ENCODE measurements at regions of chrX and their contacts with region 1.

Region 1: DNA sequence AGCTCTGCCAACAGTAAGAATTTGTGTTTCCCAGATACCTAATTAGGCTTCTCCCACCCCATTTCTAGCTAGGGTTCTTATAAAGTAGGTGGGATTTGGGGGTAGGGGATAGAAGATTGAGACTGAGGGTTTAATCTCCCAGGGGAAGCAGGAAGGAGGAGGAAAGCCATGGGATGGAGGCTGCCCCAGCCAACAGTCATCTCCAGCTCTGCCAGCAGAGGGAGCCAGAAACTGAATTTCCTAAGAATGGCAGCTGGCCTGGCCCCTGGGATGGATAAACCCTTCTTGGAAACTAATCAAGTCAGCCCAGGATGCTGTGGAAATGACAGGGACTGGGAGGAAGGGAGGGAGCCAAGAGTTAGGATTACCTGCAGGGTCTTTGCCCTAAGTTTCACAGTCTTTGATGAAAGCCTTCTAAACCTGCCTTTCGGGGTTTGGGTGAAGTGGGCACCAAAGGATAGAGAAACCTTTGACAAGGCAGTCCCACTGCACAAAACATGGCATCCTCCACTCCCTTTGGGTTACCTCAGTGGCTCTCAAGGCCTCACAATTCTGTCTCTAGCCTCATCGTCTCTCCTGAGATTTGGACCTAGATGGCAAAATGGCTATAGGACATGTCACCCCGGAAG is 6.7 kb upstream of the ERCC6L start:
- DNase-seq: peak; percentile 58
- H3K4me3 Mint-ChIP-seq: no peak overlapping the region
- H3K27ac Mint-ChIP-seq: no peak overlapping the region
- H3K4me1 Mint-ChIP-seq: peaks cover 2% of the 10 kb centered on the region
- H3K27me3 Mint-ChIP-seq: no peaks in the 10 kb centered on the region

Region 2: DNA sequence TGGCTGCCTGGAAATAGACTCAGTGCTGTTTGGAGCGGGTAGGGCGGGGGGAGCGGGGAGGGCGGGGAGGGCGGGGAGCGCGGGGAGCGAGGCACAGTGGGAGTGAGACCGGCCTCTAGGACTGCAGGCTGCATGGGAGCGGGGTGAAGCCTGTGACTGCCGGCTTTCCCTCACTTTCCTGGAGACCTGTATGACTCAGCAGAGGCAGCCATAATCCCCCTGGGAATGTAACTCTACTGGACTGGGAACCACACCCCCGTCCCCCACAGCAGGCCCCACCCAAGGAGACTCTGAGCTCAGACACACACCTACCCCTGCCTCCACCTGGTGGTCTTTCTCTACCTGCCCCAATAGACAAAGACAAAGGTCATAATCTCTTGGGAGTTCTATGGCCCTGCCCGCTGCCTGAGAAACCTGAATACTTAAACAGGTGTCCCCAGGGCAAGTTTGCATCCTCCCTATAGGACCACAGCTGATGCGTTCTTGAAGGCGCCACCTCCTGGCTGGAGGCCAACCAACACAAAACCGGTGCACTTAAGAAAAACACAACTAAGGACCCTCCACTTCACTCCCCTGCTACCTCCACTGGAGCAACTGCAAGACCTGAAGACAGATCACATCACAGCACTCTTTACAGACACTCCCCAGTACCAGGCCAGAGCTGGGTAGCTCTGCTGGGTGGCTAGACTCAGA is 309.0 kb after region 1 on chrX:
- CTCF ChIA-PET with region 1: no interaction called
- intact Hi-C with region 1: loop called (anchors 1 kb)
- DNase-seq: no peak
- H3K4me3 Mint-ChIP-seq: no peak overlapping the region
- H3K27ac Mint-ChIP-seq: no peak overlapping the region
- H3K4me1 Mint-ChIP-seq: peaks cover 3% of the 10 kb centered on the region
- H3K27me3 Mint-ChIP-seq: no peaks in the 10 kb centered on the region